Natural killer cell (primary cell): ENCODE measurements at regions of chr3 and their contacts with region 1.

Region 1: DNA sequence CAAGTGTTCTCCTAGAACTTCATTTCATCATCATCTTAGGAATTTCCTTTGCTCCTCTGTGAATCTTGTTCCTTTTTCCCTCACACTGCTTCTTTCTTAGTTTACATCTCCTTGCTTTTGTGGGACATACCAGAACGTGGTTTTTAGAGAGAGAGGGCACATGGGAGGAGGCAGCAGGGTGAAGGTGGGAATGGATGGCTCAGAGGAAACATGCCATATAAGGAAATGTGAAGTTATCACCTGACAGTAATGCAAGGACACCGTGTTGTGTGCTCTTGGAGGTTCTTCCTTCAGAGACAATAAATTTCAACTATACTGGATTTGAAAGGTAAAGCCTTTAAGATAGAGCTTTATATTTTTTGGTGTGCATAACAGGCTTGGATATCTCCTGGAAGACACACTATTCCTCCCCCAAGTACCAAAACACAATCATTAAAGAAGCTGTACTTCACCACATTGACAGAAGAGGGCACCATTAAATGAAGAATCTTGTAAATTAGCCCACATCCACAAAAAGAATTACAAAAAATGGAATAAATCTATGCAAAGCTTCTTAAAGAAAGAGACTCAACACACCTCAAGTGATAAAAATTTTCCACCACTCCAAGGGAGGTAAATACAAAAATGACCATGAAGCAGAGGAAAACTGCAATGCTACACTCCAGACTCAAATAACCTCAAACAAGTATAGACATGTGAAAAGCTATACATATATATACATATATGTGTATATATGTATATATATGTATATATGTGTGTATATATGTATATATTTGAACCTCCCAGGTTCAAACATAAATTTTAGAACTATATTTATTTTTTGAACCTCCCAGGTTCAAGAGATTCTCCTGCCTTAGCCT is 26.1 kb downstream of the RPL39L start:
- DNase-seq: peak in 1 of 2 donors; percentile 74
- ATAC-seq: peak in 2 of 3 donors; percentile 71 to 80
- H3K4me3 ChIP-seq: no peak overlapping the region
- H3K4me3 Mint-ChIP-seq: no peak overlapping the region
- H3K27ac ChIP-seq: no peak overlapping the region
- H3K27ac Mint-ChIP-seq: no peak overlapping the region
- H3K4me1 ChIP-seq: no peaks in the 10 kb centered on the region
- H3K4me1 Mint-ChIP-seq: peaks cover 7% of the 10 kb centered on the region in 2 donors
- H3K27me3 ChIP-seq: no peaks in the 10 kb centered on the region
- H3K27me3 Mint-ChIP-seq: no peaks in the 10 kb centered on the region
- CTCF ChIP-seq: peak; percentile 87

Region 2: DNA sequence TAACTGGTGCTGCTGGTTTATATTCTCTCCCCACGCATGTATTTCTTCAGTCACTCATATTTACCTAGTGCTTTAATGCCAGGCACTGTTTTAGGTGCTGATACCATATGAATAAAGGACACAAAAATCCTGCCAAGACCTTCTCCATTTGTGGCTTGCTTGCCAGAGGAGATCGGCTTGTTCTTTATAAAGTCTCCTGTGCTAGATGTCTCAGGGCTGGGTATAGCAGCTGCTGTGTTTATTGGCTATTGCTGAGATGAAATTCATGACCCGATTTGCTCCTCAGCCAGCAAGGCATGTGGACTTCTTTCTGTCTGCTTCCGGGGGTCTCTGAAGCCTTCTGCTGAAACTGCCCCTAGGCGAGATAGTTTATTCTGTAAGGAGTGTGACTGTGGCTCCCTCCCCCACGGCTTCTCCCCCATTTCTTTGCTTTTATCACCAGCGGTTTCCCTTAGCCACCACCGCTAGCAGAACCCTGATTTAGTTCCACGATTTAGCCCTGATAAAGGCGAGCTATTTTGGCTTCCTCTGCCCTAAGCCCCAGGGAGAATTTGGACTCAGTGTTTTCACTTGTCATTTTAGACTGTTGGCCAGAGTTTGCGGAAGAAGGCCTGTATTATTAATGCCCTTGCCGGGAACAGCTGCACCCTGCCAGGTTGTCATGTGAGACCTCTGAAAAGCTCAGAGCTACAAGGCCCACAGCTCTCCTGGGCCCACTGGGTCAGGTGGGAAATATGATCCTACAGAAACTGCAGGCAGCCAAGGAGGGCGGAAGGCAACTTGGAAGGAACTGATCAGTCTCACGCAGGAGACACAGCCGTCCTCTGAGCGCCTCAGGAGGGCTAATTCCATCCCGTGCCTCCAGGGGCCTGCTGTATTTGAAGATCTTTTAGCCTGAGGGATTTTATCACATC is 136.1 kb before region 1 on chr3:
- intact Hi-C with region 1: no loop called
- DNase-seq: no peak
- ATAC-seq: no peak
- H3K4me3 ChIP-seq: no peak overlapping the region
- H3K4me3 Mint-ChIP-seq: no peak overlapping the region
- H3K27ac ChIP-seq: no peak overlapping the region
- H3K27ac Mint-ChIP-seq: peak overlapping the region in 1 of 2 donors; percentile 29
- H3K4me1 ChIP-seq: no peaks in the 10 kb centered on the region
- H3K4me1 Mint-ChIP-seq: peaks cover 55 to 56% of the 10 kb centered on the region in 2 donors
- H3K27me3 ChIP-seq: no peaks in the 10 kb centered on the region
- H3K27me3 Mint-ChIP-seq: no peaks in the 10 kb centered on the region
- CTCF ChIP-seq: no peak

Region 3: GRCh38 chr3:187150599-187150998 is 37.4 kb after region 1 on chr3:
- intact Hi-C with region 1: loop called (anchors 1 kb)
- DNase-seq: peak; percentile 50 to 73
- ATAC-seq: peak in 2 of 3 donors; percentile 64
- H3K4me3 ChIP-seq: no peak overlapping the region
- H3K4me3 Mint-ChIP-seq: no peak overlapping the region
- H3K27ac ChIP-seq: no peak overlapping the region
- H3K27ac Mint-ChIP-seq: no peak overlapping the region
- H3K4me1 ChIP-seq: no peaks in the 10 kb centered on the region
- H3K4me1 Mint-ChIP-seq: peaks cover 0 to 8% of the 10 kb centered on the region in 2 donors
- H3K27me3 ChIP-seq: no peaks in the 10 kb centered on the region
- H3K27me3 Mint-ChIP-seq: peaks cover 30 to 43% of the 10 kb centered on the region in 2 donors
- CTCF ChIP-seq: peak; percentile 41

Region 4: GRCh38 chr3:187164885-187165543 is 51.9 kb after region 1 on chr3:
- intact Hi-C with region 1: loop called (anchors 1 kb)
- DNase-seq: peak in 1 of 2 donors; percentile 85
- ATAC-seq: peak; percentile 67 to 75 (median 71)
- H3K4me3 ChIP-seq: no peak overlapping the region
- H3K4me3 Mint-ChIP-seq: no peak overlapping the region
- H3K27ac ChIP-seq: no peak overlapping the region
- H3K27ac Mint-ChIP-seq: no peak overlapping the region
- H3K4me1 ChIP-seq: no peaks in the 10 kb centered on the region
- H3K4me1 Mint-ChIP-seq: no peaks in the 10 kb centered on the region
- H3K27me3 ChIP-seq: no peaks in the 10 kb centered on the region
- H3K27me3 Mint-ChIP-seq: peaks cover 26 to 50% of the 10 kb centered on the region in 2 donors
- CTCF ChIP-seq: peak; percentile 81